CD14-positive monocyte (primary cell): ENCODE measurements at regions of chr19 and their contacts with region 1.

Region 1: GRCh38 chr19:14577885-14578427 is 4.9 kb upstream of the CLEC17A start:
- DNase-seq: no peak
- H3K4me3 ChIP-seq: no peak overlapping the region
- H3K4me3 Mint-ChIP-seq: no peak overlapping the region
- H3K27ac ChIP-seq: no peak overlapping the region
- H3K27ac Mint-ChIP-seq: peak overlapping the region in 1 of 7 donors; percentile 7
- H3K4me1 ChIP-seq: peaks cover 16 to 18% of the 10 kb centered on the region in 2 donors
- H3K4me1 Mint-ChIP-seq: peaks cover 23% of the 10 kb centered on the region
- H3K27me3 ChIP-seq: no peaks in the 10 kb centered on the region
- H3K27me3 Mint-ChIP-seq: peaks cover 0 to 2% (median 1%) of the 10 kb centered on the region in 3 donors
- CTCF ChIP-seq: no peak

Region 2: DNA sequence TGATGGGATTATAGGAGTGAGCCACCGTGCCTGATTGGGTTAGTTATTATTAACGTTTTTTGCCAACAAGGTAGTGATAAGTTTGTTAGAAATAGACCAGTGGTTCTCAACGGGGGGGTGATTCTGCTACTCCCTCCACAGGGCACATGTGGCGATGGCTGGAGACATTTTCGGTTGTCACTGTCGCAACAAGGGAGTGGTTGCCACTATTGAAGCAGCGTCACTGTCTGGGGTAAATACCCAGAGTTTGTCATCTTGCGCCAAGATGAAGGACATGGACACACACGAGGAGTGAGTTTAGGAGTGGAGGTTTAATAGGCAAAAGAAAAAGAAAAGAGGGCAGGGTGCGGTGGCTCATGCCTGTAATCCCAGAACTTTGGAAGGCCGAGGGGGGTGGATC is 77.8 kb after region 1 on chr19:
- intact Hi-C with region 1: no loop called
- DNase-seq: peak; percentile 51 to 64 (median 58)
- H3K4me3 ChIP-seq: no peak overlapping the region
- H3K4me3 Mint-ChIP-seq: no peak overlapping the region
- H3K27ac ChIP-seq: peak overlapping the region in 1 of 2 donors; percentile 11
- H3K27ac Mint-ChIP-seq: peak overlapping the region in 5 of 7 donors; percentile 23 to 86 (median 72)
- H3K4me1 ChIP-seq: peaks cover 16 to 19% of the 10 kb centered on the region in 2 donors
- H3K4me1 Mint-ChIP-seq: peaks cover 19% of the 10 kb centered on the region
- H3K27me3 ChIP-seq: no peaks in the 10 kb centered on the region
- H3K27me3 Mint-ChIP-seq: peaks cover 3 to 10% (median 8%) of the 10 kb centered on the region in 3 donors
- CTCF ChIP-seq: no peak

Region 3: DNA sequence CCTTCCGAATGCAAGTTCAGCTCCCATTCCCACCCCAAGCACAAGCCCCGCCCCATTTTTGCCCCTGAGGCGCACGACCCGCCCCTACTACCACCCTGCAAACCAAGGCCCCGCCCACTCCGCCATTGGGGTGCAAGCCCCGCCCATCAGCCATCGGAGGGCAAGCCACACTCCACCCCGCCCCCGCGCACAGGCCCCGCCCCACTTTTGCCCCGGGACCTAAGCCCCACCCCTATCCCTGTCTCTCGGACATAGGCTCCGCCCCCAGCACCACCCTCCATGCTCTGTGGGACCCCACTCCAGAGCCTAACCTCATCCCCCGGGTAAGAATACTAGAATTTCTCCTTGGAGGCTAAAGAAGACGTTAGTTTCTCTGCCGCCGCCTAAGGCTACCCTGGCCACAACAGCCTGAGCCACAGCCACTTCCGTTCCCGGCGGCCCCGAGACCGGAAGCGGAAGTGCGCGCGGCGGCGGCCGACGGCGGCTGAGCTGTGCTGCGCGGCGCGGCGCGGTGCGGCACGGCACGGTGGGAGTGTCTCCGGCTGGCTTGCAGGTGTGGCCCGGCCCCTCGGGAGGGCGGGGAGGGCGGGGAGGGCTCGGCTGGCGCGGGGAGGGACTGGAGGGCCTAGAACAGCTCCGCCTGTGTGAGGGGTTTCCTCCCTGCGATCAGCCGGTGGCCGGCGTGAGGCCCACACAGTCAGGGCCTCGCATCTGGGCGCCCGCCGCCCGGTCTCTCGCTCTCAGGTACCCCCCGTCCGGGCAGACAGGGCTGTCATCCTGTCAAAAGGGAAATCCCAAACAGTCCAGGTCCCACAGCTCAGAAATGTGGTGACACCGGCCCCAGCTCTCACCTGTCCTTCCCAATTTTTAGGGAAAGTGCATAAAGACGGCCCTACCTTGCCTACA is 111.9 kb after region 1 on chr19 and contains the start of gene ZNF333:
- intact Hi-C with region 1: loop called (anchors 2 kb)
- DNase-seq: peak; percentile 79 to 83 (median 83)
- H3K4me3 ChIP-seq: peak within 1 kb of the TSS; percentile 62 to 89 (median 85)
- H3K4me3 Mint-ChIP-seq: peak within 1 kb of the TSS; percentile 92 to 96
- H3K27ac ChIP-seq: peak within 1 kb of the TSS; percentile 93 to 95
- H3K27ac Mint-ChIP-seq: peak within 1 kb of the TSS; percentile 96 to 100 (median 100)
- H3K4me1 ChIP-seq: peaks cover 29 to 36% of the 10 kb centered on the region in 2 donors
- H3K4me1 Mint-ChIP-seq: peaks cover 34% of the 10 kb centered on the region
- H3K27me3 ChIP-seq: no peaks in the 10 kb centered on the region
- H3K27me3 Mint-ChIP-seq: no peaks in the 10 kb centered on the region
- CTCF ChIP-seq: no peak
- polyA plus RNA-seq, gene ZNF333: 7.6 to 43.0 (median 9.3) TPM